Common myeloid progenitor, CD34-positive (primary cell): ENCODE measurements at regions of chr9 and their contacts with region 1.

Region 1: GRCh38 chr9:19456996-19457692 is 48.3 kb downstream of the ACER2 start:
- DNase-seq: peak; percentile 68 to 75 (median 70)
- H3K4me3 ChIP-seq: peak overlapping the region in 6 of 7 experiments; percentile 34 to 77 (median 46)
- H3K27ac ChIP-seq: no peak overlapping the region
- H3K4me1 ChIP-seq: peaks cover 7 to 16% (median 11%) of the 10 kb centered on the region in 4 experiments
- H3K27me3 ChIP-seq: no peaks in the 10 kb centered on the region

Region 2: DNA sequence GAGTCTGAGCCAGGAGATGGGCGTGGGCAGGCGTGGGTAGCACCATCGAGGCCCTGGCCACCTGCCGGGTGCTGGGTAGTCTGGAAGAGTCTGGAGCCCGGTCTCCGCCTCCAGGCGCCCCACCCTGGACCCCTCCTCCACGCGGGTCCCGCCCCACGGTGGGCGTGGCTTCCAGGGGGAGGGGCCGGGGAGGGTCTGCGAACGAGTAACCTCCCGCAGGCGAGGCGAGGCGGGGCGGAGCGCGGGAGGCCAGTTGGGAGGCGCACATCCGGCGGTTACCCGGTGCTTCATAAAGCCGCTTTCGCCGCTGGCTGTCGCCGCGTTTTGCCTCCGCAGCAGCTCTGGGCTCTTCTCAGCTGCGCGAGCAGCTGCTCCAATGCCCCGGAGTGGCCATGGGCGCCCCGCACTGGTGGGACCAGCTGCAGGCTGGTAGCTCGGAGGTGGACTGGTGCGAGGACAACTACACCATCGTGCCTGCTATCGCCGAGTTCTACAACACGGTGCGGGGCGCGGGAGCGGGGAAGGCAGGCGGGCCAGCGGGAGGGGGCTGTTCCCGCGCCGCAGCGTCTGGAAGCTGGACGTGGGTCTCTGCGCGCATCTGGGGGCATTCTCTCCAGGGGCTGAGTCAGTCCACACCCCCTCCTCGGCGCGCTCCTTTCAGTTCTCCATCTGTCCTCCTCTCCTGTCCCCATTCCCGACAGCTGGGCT is 48.3 kb before region 1 on chr9 and contains the start of gene ACER2:
- CTCF ChIA-PET with region 1: interaction called, 10 read pairs
- POLR2A ChIA-PET with region 1: no interaction called
- DNase-seq: peak; percentile 92 to 95 (median 94)
- H3K4me3 ChIP-seq: peak within 1 kb of the TSS; percentile 68 to 97 (median 88)
- H3K27ac ChIP-seq: peak within 1 kb of the TSS in 1 of 2 experiments; percentile 56
- H3K4me1 ChIP-seq: peaks cover 3 to 20% (median 19%) of the 10 kb centered on the region in 4 experiments
- H3K27me3 ChIP-seq: no peaks in the 10 kb centered on the region